ENCODE measurements at regions of chr20 and their contacts with region 1.

Region 1: GRCh38 chr20:51639206-51639832 is 96.8 kb upstream of the NFATC2 start:
- DNase-seq: peak; percentile 7 to 39
- ATAC-seq: peak; percentile 45 to 55
- H3K4me3 ChIP-seq: no peak overlapping the region
- H3K27ac ChIP-seq: no peak overlapping the region
- H3K4me1 ChIP-seq: peaks cover 0 to under 1% of the 10 kb centered on the region in 2 donors
- H3K27me3 ChIP-seq: no peaks in the 10 kb centered on the region
- CTCF ChIP-seq: peak; percentile 52 to 75 (median 68)
- POLR2A ChIP-seq: no peak

Region 2: GRCh38 chr20:50987592-50988210 is 651.6 kb before region 1 on chr20:
- in situ Hi-C with region 1: loop called in 1 of 4 experiments (anchors 25 kb)
- intact Hi-C with region 1: no loop called
- DNase-seq: peak; percentile 48
- ATAC-seq: peak; percentile 98 to 99
- H3K4me3 ChIP-seq: no peak overlapping the region
- H3K27ac ChIP-seq: no peak overlapping the region
- H3K4me1 ChIP-seq: peaks cover 0 to 3% of the 10 kb centered on the region in 2 donors
- H3K27me3 ChIP-seq: peaks cover 15 to 24% (median 21%) of the 10 kb centered on the region in 3 donors
- CTCF ChIP-seq: peak; percentile 74 to 88 (median 84)
- POLR2A ChIP-seq: no peak

Region 3: DNA sequence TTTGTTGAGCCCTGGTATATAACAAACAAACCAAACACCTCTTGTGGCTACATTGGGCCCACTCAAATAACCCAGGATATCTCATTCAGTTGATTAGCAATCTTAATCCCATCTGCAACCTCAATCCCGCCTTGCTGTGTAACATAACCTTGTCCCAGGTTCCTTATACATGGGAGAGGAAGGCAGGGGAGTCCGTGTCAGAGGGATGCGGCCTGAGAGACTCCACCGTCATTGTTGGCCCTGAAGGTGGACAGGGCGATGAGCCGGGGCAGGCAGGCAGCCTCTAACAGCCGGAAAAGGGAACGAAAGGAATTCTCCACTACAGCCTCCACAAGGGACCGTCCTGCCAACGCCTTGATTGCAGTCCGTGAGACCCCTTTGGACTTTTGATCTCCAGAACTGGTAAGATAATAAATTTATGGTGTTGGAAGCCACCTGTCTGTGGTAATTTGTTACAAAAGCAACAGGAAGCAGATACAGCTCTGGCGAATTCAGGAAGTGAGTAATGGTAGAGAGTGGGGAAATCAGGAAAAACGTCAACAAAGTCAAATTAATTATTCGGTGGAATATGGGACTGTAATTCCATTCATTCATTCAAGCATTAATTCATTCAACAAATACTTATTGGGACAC is 287.5 kb after region 1 on chr20:
- in situ Hi-C with region 1: no loop called
- intact Hi-C with region 1: no loop called
- DNase-seq: no peak
- ATAC-seq: no peak
- H3K4me3 ChIP-seq: no peak overlapping the region
- H3K27ac ChIP-seq: no peak overlapping the region
- H3K4me1 ChIP-seq: no peaks in the 10 kb centered on the region
- H3K27me3 ChIP-seq: peaks cover 0 to under 1% (median 0%) of the 10 kb centered on the region in 3 donors
- CTCF ChIP-seq: no peak
- POLR2A ChIP-seq: no peak

Region 4: DNA sequence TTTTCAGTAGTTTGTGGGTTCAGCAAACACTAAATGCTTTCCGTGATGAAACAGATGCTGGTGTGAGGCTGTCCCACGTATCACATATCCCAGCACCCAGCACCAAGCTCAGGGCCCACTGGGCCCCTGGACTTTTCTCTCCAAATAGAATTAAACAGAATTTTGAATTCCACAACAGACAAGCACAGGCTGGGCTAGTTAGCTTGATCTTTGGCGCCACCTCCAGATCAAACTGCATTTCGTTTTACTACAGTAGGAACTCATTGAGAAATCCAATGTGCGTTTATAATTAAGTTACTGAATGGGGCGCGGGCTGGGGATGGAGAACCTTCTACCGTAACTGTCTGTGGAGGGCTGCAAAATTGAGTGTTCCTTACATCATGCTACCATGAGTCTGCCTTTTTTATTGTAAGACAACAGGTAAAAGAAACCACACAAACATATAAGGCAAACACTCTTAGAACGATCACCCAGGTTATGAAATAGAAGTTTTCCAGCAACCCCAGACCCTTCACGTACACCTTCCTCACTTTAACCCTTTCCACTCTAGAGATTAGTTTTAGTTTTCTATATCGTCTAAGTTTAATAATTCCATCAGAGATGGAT is 444.4 kb after region 1 on chr20:
- in situ Hi-C with region 1: no loop called
- intact Hi-C with region 1: loop called (anchors 10 kb)
- DNase-seq: no peak
- ATAC-seq: no peak
- H3K4me3 ChIP-seq: no peak overlapping the region
- H3K27ac ChIP-seq: no peak overlapping the region
- H3K4me1 ChIP-seq: no peaks in the 10 kb centered on the region
- H3K27me3 ChIP-seq: no peaks in the 10 kb centered on the region
- CTCF ChIP-seq: peak in 3 of 5 experiments; percentile 4 to 43 (median 18)
- POLR2A ChIP-seq: no peak

Region 5: GRCh38 chr20:52150440-52151258 is 511.3 kb after region 1 on chr20:
- in situ Hi-C with region 1: no loop called
- intact Hi-C with region 1: loop called (anchors 5 kb)
- DNase-seq: no peak
- ATAC-seq: peak in 1 of 2 donors; percentile 46
- H3K4me3 ChIP-seq: no peak overlapping the region
- H3K27ac ChIP-seq: no peak overlapping the region
- H3K4me1 ChIP-seq: no peaks in the 10 kb centered on the region
- H3K27me3 ChIP-seq: no peaks in the 10 kb centered on the region
- CTCF ChIP-seq: peak; percentile 12 to 70 (median 43)
- POLR2A ChIP-seq: no peak